ENCODE measurements at regions of chr17 and their contacts with region 1.

Region 1: DNA sequence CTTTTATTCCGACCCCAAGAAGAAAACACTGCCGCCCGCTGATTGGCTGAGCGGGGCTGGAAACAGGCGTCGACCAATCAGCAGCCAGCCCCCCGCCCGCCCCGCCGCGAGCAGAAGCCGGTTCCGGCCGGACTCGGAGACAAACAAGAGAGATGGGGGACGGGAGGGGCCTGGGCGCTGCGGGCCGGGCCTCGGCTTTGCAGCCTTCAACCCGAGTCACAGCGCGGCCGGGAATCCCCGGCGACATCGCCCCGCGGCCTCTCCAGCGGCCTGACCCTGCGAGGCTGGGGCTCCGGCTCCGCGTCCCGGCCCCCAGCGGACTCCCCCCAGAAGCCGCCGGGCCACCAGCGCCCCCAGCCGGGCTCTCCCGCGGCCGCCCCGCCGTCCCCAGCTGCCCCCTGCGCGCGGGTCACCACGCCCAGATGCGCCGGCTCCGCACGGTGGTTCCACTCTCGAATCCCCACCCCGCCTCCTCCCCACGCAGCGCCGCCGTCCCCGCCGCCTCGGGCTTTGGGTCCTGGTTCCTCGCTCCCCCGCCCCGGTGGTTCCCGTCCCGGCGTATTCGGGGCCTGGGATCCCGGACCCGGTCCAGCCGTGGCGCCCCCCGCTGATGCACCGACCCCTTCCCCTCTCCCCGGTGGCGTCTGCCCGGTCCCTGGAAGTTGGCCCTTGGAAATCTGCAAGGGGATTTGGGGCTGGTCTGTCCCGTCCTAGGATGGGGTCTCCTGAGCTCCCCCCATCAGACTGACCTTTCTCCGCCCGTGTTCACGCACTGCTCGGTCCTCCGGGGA is 417 bp upstream of the SLC43A2 start:
- DNase-seq: peak in 1 of 2 experiments; percentile 95
- H3K4me3 ChIP-seq: peak overlapping the region; percentile 67 to 79 (median 68)
- H3K27ac ChIP-seq: peak overlapping the region; percentile 53; the same call in 1 of the 2 replicates
- H3K4me1 ChIP-seq: peaks cover 0 to 7% (median 5%) of the 10 kb centered on the region in 4 experiments; a peak in 6 of 7 replicates
- H3K27me3 ChIP-seq: peaks cover 0 to 13% (median 5%) of the 10 kb centered on the region in 4 experiments; a peak in 5 of 7 replicates
- CTCF ChIP-seq: peak; percentile 9 to 22 (median 14); a peak in 3 of 4 replicates
- EP300 ChIP-seq: no peak; a peak in 1 of 3 replicates
- POLR2A ChIP-seq: peak in 1 of 2 experiments; percentile 72; a peak in 2 of 3 replicates
- RAD21 ChIP-seq: peak in 1 of 2 experiments; percentile 37; a peak in 2 of 4 replicates

Region 2: GRCh38 chr17:1606352-1607033 is 22.6 kb before region 1 on chr17:
- CTCF ChIA-PET with region 1: interaction called, 10 read pairs
- POLR2A ChIA-PET with region 1: interaction called, 4 read pairs
- DNase-seq: no peak
- H3K4me3 ChIP-seq: no peak overlapping the region
- H3K27ac ChIP-seq: no peak overlapping the region
- H3K4me1 ChIP-seq: peaks cover 0 to 14% (median 11%) of the 10 kb centered on the region in 4 experiments; a peak in 6 of 7 replicates
- H3K27me3 ChIP-seq: no peaks in the 10 kb centered on the region
- CTCF ChIP-seq: no peak
- EP300 ChIP-seq: no peak
- POLR2A ChIP-seq: no peak
- RAD21 ChIP-seq: no peak

Region 3: DNA sequence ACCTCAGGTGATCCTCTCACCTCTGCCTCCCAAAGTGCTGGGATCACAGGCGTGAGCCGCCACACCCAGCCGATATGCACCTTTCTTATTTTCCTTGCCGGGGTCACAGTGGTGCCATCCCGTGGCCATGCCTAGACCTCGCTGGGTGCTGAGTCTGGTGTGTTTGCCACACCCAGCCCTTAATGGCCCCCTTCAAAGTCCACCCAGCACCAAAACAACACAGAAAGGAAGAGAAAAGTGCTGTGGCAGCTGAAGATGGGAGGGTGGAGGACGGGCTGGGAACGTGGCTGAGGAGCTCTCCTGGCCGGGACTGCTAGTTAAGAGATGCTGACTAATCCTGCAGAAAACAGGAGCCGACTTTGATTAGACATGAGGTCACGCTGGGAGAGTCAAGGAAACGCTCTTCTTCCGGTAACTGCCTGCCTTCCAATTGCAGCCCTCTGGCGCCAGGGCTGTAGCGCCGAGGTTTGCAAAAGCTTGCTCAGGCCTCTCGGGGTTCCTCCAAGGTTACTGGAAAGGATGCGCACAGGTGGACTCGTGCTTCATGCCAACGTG is 11.4 kb before region 1 on chr17:
- CTCF ChIA-PET with region 1: interaction called, 4 read pairs
- POLR2A ChIA-PET with region 1: interaction called, 10 read pairs
- DNase-seq: no peak
- H3K4me3 ChIP-seq: no peak overlapping the region
- H3K27ac ChIP-seq: no peak overlapping the region
- H3K4me1 ChIP-seq: peaks cover 0 to 4% (median 0%) of the 10 kb centered on the region in 4 experiments; a peak in 2 of 7 replicates
- H3K27me3 ChIP-seq: no peaks in the 10 kb centered on the region
- CTCF ChIP-seq: no peak
- EP300 ChIP-seq: no peak
- POLR2A ChIP-seq: no peak
- RAD21 ChIP-seq: no peak; a peak in 1 of 4 replicates

Region 4: GRCh38 chr17:1639549-1640343 is 10.7 kb after region 1 on chr17:
- CTCF ChIA-PET with region 1: interaction called, 26 read pairs
- POLR2A ChIA-PET with region 1: interaction called, 29 read pairs
- DNase-seq: no peak
- H3K4me3 ChIP-seq: no peak overlapping the region
- H3K27ac ChIP-seq: no peak overlapping the region
- H3K4me1 ChIP-seq: peaks cover 0 to 30% (median 14%) of the 10 kb centered on the region in 4 experiments; a peak in 5 of 7 replicates
- H3K27me3 ChIP-seq: peaks cover 0 to 13% (median 6%) of the 10 kb centered on the region in 4 experiments; a peak in 5 of 7 replicates
- CTCF ChIP-seq: no peak
- EP300 ChIP-seq: no peak
- POLR2A ChIP-seq: no peak
- RAD21 ChIP-seq: no peak

Region 5: DNA sequence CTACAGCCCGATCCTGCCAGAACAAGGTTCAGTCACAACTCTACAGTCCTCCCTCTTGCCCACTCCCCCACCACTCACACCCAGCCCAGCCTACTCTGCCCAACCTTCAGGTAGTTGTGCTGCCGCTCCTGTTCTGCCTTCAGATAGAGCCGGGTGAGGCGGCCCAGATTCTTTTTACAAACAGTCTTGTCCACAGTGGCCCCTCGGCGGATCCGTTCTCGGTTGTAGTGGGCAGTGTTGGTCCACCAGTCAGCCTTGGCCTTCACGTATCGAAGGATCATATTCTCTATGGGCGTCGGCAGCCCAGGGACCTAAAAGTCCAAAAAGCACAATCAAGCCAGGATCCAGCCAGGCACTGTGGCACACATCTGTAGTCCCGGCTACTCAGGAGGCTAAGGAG is 47.4 kb after region 1 on chr17:
- CTCF ChIA-PET with region 1: no interaction called
- POLR2A ChIA-PET with region 1: no interaction called
- DNase-seq: no peak
- H3K4me3 ChIP-seq: no peak overlapping the region
- H3K27ac ChIP-seq: no peak overlapping the region
- H3K4me1 ChIP-seq: no peaks in the 10 kb centered on the region
- H3K27me3 ChIP-seq: no peaks in the 10 kb centered on the region
- CTCF ChIP-seq: no peak
- EP300 ChIP-seq: no peak
- POLR2A ChIP-seq: no peak
- RAD21 ChIP-seq: no peak

Measured in H1 (cell line).